WTC11 (cell line): ENCODE measurements at regions of chr12 and their contacts with region 1.

Region 1: DNA sequence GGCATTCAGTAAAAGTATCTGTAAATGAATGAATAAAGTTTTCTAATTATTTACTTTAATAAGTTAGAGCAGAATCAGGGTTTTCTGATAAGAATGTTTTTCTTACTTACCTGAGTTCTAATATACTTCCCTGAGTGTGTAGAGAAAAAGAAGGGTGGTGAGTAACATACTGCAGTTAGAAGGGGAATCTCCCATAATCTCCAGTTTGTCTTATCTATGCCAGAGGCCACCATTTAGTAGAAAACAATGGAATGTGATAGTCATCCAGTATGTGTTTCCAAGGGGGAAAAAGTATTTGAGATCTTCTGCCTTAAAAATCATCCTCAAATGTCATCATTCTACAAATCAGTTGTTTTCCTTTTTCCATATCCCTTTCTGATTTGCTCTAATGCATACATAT is 56.5 kb upstream of the PAWR start:
- DNase-seq: no peak
- ATAC-seq: no peak
- H3K4me3 Mint-ChIP-seq: no peak overlapping the region
- H3K27ac Mint-ChIP-seq: no peak overlapping the region
- H3K4me1 Mint-ChIP-seq: no peaks in the 10 kb centered on the region
- H3K27me3 Mint-ChIP-seq: no peaks in the 10 kb centered on the region
- CTCF ChIP-seq: no peak

Region 2: GRCh38 chr12:79674629-79675028 is 72.6 kb before region 1 on chr12:
- CTCF ChIA-PET with region 1: no interaction called
- POLR2A ChIA-PET with region 1: no interaction called
- DNase-seq: no peak
- ATAC-seq: no peak
- H3K4me3 Mint-ChIP-seq: peak overlapping the region; percentile 34
- H3K27ac Mint-ChIP-seq: peak overlapping the region; percentile 58
- H3K4me1 Mint-ChIP-seq: peaks cover 76% of the 10 kb centered on the region
- H3K27me3 Mint-ChIP-seq: no peaks in the 10 kb centered on the region
- CTCF ChIP-seq: no peak

Region 3: DNA sequence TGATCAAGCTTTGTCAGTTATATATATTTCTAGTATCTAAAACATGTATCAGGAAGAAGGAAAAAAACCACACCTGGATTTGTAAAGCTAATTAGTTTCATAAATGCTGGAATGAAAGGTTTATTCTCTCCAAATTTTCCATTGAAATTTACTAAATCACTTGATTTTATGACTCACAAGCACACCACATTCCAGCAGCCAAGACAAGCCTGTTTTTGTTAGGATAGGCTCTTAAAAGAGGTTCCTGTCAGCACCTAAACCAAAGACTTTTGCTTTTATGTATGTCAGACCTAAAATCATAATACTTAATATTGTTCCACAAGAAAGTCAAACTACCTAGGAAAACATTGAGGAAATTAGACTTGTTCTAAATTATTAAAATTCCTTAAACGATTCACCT is 28.8 kb after region 1 on chr12:
- CTCF ChIA-PET with region 1: no interaction called
- POLR2A ChIA-PET with region 1: interaction called, 10 read pairs
- DNase-seq: no peak
- ATAC-seq: no peak
- H3K4me3 Mint-ChIP-seq: no peak overlapping the region
- H3K27ac Mint-ChIP-seq: no peak overlapping the region
- H3K4me1 Mint-ChIP-seq: no peaks in the 10 kb centered on the region
- H3K27me3 Mint-ChIP-seq: no peaks in the 10 kb centered on the region
- CTCF ChIP-seq: no peak